ENCODE measurements at regions of chr11 and their contacts with region 1.

Region 1: DNA sequence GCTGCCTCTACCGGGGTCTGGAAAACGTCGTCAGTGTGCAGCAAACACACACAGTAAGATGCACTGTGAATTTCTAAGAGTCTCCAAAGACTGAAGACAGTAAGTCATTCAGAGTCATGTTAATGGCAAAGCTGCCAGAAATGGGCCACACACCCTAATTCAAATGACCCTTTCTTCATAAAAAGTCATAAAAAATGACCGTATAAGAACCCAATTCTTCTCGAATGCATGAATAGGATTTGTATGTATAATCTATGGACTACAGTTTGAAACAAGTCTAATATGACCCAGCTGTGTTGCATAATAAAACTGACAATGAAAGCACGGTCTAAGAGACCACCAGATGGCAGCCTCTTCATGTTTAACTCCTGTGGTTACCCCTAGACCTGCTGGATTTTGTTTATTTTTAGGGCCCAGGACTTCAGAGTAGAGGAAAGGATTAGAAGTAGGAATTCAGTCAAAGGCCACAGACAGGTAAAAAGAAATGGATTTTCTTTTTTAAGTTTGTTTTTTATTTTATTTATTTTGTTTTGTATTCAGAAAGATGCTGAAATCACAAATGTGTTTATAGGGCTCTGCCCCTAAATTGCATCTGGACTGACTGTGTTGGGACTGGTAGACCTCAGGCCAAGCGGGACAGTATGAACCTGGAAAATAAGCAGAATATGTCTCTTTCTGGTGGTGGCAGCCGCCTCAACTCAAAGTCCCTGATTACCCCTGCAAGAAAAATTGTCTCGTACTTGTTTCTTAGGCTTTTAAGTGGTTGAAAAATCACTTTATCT is 32.1 kb upstream of the SLC5A12 start:
- DNase-seq: no peak
- ATAC-seq: peak; percentile 58 to 71
- H3K4me3 ChIP-seq: no peak overlapping the region
- H3K27ac ChIP-seq: no peak overlapping the region
- H3K4me1 ChIP-seq: no peaks in the 10 kb centered on the region
- H3K27me3 ChIP-seq: no peaks in the 10 kb centered on the region
- CTCF ChIP-seq: peak; percentile 60

Region 2: GRCh38 chr11:26457636-26458035 is 296.3 kb before region 1 on chr11:
- intact Hi-C with region 1: no loop called
- DNase-seq: no peak
- ATAC-seq: no peak
- H3K4me3 ChIP-seq: no peak overlapping the region
- H3K27ac ChIP-seq: no peak overlapping the region
- H3K4me1 ChIP-seq: no peaks in the 10 kb centered on the region
- H3K27me3 ChIP-seq: no peaks in the 10 kb centered on the region
- CTCF ChIP-seq: no peak

Region 3: GRCh38 chr11:27158722-27159679 is 405.1 kb after region 1 on chr11:
- intact Hi-C with region 1: loop called (anchors 10 kb)
- DNase-seq: no peak
- ATAC-seq: peak; percentile 76 to 88
- H3K4me3 ChIP-seq: no peak overlapping the region
- H3K27ac ChIP-seq: no peak overlapping the region
- H3K4me1 ChIP-seq: no peaks in the 10 kb centered on the region
- H3K27me3 ChIP-seq: peaks cover 5% of the 10 kb centered on the region
- CTCF ChIP-seq: peak; percentile 71